Endothelial cell of umbilical vein (primary cell): ENCODE measurements at regions of chr1 and their contacts with region 1.

Region 1: GRCh38 chr1:145845514-145846161 is at the start of gene NUDT17:
- DNase-seq: peak; percentile 71
- H3K4me3 ChIP-seq: peak within 1 kb of the TSS; percentile 37 to 59 (median 58)
- H3K27ac ChIP-seq: peak within 1 kb of the TSS; percentile 28
- H3K4me1 ChIP-seq: peaks cover 24% of the 10 kb centered on the region
- H3K27me3 ChIP-seq: no peaks in the 10 kb centered on the region
- CTCF ChIP-seq: peak; percentile 96 to 97
- POLR2A ChIP-seq: peak; percentile 75
- total RNA-seq, gene NUDT17: 3.6 and 5.1 TPM in 2 replicates

Region 2: GRCh38 chr1:145765574-145765973 is 80.1 kb before region 1 on chr1:
- CTCF ChIA-PET with region 1: no interaction called
- POLR2A ChIA-PET with region 1: no interaction called
- dilution Hi-C with region 1: no loop called
- intact Hi-C with region 1: no loop called
- DNase-seq: no peak
- H3K4me3 ChIP-seq: no peak overlapping the region
- H3K27ac ChIP-seq: no peak overlapping the region
- H3K4me1 ChIP-seq: no peaks in the 10 kb centered on the region
- H3K27me3 ChIP-seq: no peaks in the 10 kb centered on the region
- CTCF ChIP-seq: no peak
- POLR2A ChIP-seq: no peak

Region 3: GRCh38 chr1:145823565-145824498 is 21.8 kb before region 1 on chr1 and contains the starts of genes POLR3C and RNF115:
- CTCF ChIA-PET with region 1: interaction called, 69 read pairs
- POLR2A ChIA-PET with region 1: no interaction called
- dilution Hi-C with region 1: no loop called
- intact Hi-C with region 1: no loop called
- DNase-seq: peak; percentile 90
- H3K4me3 ChIP-seq: peak within 1 kb of the TSS; percentile 47 to 95 (median 86)
- H3K27ac ChIP-seq: peak within 1 kb of the TSS; percentile 69
- H3K4me1 ChIP-seq: peaks cover 13% of the 10 kb centered on the region
- H3K27me3 ChIP-seq: no peaks in the 10 kb centered on the region
- CTCF ChIP-seq: no peak
- POLR2A ChIP-seq: peak; percentile 14
- total RNA-seq, gene POLR3C: 30.4 and 31.0 TPM in 2 replicates
- total RNA-seq, gene RNF115: 17.3 and 20.5 TPM in 2 replicates

Region 4: GRCh38 chr1:145885738-145886287 is 40.2 kb after region 1 on chr1 and contains the start of gene ANKRD35:
- CTCF ChIA-PET with region 1: interaction called, 152 read pairs
- POLR2A ChIA-PET with region 1: no interaction called
- dilution Hi-C with region 1: no loop called
- intact Hi-C with region 1: no loop called
- DNase-seq: peak; percentile 80
- H3K4me3 ChIP-seq: peak within 1 kb of the TSS; percentile 64 to 94 (median 68)
- H3K27ac ChIP-seq: no peak within 1 kb of the TSS
- H3K4me1 ChIP-seq: peaks cover 23% of the 10 kb centered on the region
- H3K27me3 ChIP-seq: no peaks in the 10 kb centered on the region
- CTCF ChIP-seq: no peak
- POLR2A ChIP-seq: no peak
- total RNA-seq, gene ANKRD35: 0.14 and 0.20 TPM in 2 replicates

Region 5: DNA sequence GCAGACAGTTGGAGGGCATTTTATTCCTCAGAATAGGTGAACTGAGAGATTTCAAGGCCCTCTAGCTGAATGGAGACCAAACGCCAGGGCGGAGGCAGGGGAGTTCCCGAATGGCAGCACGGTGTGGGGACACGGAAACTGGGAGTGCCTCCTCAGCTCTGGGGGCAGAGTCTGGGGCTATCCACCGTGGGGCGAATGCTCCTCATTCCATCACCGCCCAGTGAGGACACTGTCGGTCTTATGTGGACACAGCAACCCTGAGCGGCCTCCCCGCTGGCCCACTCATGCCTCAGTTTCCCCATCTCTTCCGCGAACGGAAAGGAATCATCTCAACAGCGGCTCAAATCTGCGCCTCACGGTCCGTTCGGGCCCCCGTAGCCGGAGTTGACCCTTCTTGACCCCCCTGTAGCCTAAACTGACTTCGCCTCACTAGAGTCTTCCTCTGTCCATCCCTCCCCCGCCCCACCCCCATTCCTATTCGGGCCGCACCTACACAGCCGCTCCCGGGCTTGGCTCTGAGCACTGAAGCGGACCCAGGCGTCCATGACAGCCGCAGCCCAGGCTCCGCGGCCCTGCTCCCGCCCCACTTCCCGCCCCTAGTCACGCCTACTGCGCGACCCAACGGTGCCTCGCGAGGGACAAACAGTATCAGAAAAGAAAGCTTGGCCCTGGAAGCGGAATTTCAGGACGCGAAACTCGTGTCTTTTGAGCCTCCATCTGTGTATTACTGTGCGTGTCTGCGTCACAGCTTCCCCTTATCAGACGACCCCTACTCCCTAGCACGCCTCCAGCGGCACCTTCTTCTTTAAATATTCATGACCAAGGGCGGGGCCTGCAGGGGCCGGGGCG is 72.7 kb after region 1 on chr1 and contains the start of gene PEX11B:
- CTCF ChIA-PET with region 1: interaction called, 15 read pairs
- POLR2A ChIA-PET with region 1: no interaction called
- dilution Hi-C with region 1: no loop called
- intact Hi-C with region 1: no loop called
- DNase-seq: peak; percentile 96
- H3K4me3 ChIP-seq: peak within 1 kb of the TSS; percentile 45 to 77 (median 62)
- H3K27ac ChIP-seq: peak within 1 kb of the TSS; percentile 19
- H3K4me1 ChIP-seq: peaks cover 16% of the 10 kb centered on the region
- H3K27me3 ChIP-seq: no peaks in the 10 kb centered on the region
- CTCF ChIP-seq: no peak
- POLR2A ChIP-seq: peak; percentile 63
- total RNA-seq, gene PEX11B: 29.0 and 30.5 TPM in 2 replicates

Region 6: DNA sequence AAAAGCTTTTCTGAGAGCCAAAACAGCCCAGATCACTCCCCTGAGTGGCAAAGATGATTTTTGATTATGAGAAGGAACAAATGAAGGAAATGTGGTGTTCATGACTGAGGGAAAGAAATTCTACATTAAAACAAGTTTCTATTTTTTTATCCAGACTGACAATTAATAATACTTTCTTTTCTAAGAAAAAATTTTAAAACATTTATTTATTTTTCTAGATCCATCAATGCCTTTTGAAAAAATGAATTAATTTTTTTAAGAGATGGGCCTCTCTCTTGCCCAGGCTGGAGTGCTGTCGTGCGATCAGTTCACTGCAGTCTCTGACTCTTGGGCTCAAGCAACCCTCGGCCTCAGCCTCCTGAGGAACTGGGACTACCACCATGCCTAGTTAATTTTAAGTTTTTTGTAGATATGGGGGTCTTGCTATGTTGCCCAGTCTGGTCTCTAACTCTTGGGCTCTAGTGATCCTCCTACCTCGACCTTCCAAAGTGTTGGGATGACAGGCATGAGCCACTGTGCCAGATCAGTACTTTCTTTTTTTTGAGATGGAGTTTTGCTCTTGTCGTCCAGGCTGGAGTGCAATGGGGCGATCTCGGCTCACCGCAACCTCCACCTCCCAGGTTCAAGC is 162.0 kb after region 1 on chr1:
- CTCF ChIA-PET with region 1: interaction called, 43 read pairs
- POLR2A ChIA-PET with region 1: interaction called, 7 read pairs
- dilution Hi-C with region 1: no loop called
- intact Hi-C with region 1: no loop called
- DNase-seq: no peak
- H3K4me3 ChIP-seq: no peak overlapping the region
- H3K27ac ChIP-seq: no peak overlapping the region
- H3K4me1 ChIP-seq: peaks cover 4% of the 10 kb centered on the region
- H3K27me3 ChIP-seq: no peaks in the 10 kb centered on the region
- CTCF ChIP-seq: no peak
- POLR2A ChIP-seq: no peak